ENCODE measurements at regions of chr3 and their contacts with region 1.

Region 1: DNA sequence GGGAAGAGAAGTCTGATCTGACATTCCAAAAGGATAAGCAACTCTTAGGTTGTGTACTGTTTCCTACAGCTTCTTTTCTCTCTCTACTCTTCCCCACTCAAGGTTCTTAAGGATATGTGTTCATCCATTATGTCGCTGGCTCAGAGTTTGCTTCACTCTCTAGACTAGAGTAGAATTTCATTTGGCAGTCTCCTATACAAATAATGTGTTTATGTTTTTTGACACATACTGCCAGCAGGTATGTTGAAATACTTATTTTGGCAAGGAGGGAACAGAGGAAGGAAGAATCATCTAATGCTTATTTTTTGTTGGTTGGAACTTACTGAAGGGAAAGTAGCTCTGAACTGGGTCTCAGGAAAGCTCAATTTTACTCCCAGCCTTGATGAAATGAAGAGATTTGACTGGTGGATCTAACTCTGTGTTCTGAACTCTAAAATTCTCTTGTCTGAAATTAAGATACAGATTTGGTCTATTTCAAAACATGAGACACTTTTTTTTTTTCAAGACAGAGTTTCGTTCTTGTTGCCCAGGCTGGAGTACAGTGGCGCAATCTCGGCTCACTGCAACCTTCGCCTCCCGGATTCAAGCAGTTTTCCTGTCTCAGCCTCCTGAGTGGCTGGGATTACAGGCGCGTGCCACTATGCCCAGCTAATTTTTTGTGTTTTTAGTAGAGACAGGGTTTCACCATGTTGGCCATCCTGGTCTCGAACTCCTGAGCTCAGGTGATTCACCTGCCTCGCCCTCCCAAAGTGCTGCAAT is 7.6 kb upstream of the EMC3 start:
- DNase-seq: no peak
- H3K4me3 ChIP-seq: no peak overlapping the region
- H3K4me3 Mint-ChIP-seq: no peak overlapping the region
- H3K27ac ChIP-seq: no peak overlapping the region
- H3K27ac Mint-ChIP-seq: peak overlapping the region in 1 of 7 donors; percentile 44
- H3K4me1 ChIP-seq: no peaks in the 10 kb centered on the region
- H3K4me1 Mint-ChIP-seq: peaks cover 0 to 2% (median 0%) of the 10 kb centered on the region in 4 donors
- H3K27me3 ChIP-seq: no peaks in the 10 kb centered on the region
- H3K27me3 Mint-ChIP-seq: no peaks in the 10 kb centered on the region

Region 2: DNA sequence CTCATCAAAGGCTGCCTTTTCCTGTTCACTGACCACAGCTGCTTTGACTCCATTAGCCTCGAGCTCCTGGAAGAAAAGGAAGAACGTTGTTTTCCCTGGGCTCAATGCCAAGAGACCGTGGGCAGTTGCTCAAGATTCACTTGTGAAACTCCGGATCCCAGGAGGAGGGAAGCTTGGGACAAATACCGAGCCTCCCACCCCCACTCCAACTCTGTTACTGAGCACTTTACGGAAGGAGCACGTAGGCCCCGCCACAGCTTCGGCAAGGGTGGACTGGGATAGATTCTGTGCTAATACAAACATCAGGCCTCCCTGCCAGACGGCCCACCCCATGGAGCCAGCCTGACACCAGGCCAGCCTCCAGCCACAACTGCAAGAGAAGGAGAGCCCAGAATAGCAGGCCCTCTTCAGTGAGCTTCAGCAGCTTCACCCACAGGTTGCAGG is 21.2 kb after region 1 on chr3:
- CTCF ChIA-PET with region 1: no interaction called
- POLR2A ChIA-PET with region 1: no interaction called
- intact Hi-C with region 1: no loop called
- DNase-seq: no peak
- H3K4me3 ChIP-seq: no peak overlapping the region
- H3K4me3 Mint-ChIP-seq: peak overlapping the region in 1 of 8 donors; percentile 20
- H3K27ac ChIP-seq: no peak overlapping the region
- H3K27ac Mint-ChIP-seq: no peak overlapping the region
- H3K4me1 ChIP-seq: peaks cover 9% of the 10 kb centered on the region
- H3K4me1 Mint-ChIP-seq: peaks cover under 1 to 10% (median 4%) of the 10 kb centered on the region in 4 donors
- H3K27me3 ChIP-seq: no peaks in the 10 kb centered on the region
- H3K27me3 Mint-ChIP-seq: no peaks in the 10 kb centered on the region

Region 3: GRCh38 chr3:10047876-10048275 is 53.6 kb after region 1 on chr3:
- CTCF ChIA-PET with region 1: no interaction called
- POLR2A ChIA-PET with region 1: no interaction called
- intact Hi-C with region 1: loop called (anchors 5 kb)
- DNase-seq: no peak
- H3K4me3 ChIP-seq: no peak overlapping the region
- H3K4me3 Mint-ChIP-seq: no peak overlapping the region
- H3K27ac ChIP-seq: no peak overlapping the region
- H3K27ac Mint-ChIP-seq: no peak overlapping the region
- H3K4me1 ChIP-seq: no peaks in the 10 kb centered on the region
- H3K4me1 Mint-ChIP-seq: no peaks in the 10 kb centered on the region
- H3K27me3 ChIP-seq: no peaks in the 10 kb centered on the region
- H3K27me3 Mint-ChIP-seq: peaks cover 0 to 2% of the 10 kb centered on the region in 2 donors

Region 4: DNA sequence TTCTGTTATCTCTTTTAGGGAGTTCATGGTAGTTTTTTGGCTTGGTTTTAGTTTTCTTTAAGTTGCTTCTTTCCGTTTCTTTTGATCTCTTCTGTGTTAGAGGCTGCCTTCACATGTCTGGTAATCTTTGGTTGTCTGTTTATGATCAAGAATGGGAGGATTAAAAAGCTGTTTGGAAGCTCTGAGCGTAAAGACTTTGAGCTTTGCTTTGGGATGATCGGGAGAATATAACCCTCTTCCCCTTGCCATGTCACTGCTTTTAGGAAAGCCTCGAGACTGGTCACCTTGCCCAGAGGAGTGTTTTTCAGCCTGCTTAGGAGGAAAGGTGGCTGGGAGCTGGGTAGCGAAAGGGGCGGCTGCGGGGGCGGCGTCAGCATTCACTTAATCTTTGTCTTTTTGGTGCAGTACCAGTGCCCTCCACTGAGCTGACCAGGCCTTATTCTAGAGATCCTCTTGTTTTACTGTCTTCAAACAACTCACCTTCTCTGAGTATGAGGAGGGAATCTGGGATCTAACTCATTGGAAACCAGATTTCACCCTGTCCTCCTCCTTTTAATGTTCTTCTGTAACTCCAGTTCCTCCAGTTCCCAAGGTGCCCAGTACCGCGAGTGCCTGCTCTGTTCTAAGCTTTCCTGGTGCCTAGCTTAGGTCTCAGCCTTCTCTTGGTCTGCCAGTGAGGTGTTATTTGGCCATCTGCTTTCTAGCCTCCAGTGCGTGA is 269.5 kb after region 1 on chr3:
- CTCF ChIA-PET with region 1: no interaction called
- POLR2A ChIA-PET with region 1: no interaction called
- intact Hi-C with region 1: no loop called
- DNase-seq: peak; percentile 66 to 80 (median 71)
- H3K4me3 ChIP-seq: peak overlapping the region in 1 of 2 donors; percentile 22
- H3K4me3 Mint-ChIP-seq: peak overlapping the region; percentile 72 to 91 (median 80)
- H3K27ac ChIP-seq: peak overlapping the region; percentile 64
- H3K27ac Mint-ChIP-seq: peak overlapping the region; percentile 78 to 97 (median 91)
- H3K4me1 ChIP-seq: peaks cover 83% of the 10 kb centered on the region
- H3K4me1 Mint-ChIP-seq: peaks cover 48 to 93% (median 76%) of the 10 kb centered on the region in 4 donors
- H3K27me3 ChIP-seq: no peaks in the 10 kb centered on the region
- H3K27me3 Mint-ChIP-seq: no peaks in the 10 kb centered on the region